ENCODE measurements at regions of chr19 and their contacts with region 1.

Region 1: DNA sequence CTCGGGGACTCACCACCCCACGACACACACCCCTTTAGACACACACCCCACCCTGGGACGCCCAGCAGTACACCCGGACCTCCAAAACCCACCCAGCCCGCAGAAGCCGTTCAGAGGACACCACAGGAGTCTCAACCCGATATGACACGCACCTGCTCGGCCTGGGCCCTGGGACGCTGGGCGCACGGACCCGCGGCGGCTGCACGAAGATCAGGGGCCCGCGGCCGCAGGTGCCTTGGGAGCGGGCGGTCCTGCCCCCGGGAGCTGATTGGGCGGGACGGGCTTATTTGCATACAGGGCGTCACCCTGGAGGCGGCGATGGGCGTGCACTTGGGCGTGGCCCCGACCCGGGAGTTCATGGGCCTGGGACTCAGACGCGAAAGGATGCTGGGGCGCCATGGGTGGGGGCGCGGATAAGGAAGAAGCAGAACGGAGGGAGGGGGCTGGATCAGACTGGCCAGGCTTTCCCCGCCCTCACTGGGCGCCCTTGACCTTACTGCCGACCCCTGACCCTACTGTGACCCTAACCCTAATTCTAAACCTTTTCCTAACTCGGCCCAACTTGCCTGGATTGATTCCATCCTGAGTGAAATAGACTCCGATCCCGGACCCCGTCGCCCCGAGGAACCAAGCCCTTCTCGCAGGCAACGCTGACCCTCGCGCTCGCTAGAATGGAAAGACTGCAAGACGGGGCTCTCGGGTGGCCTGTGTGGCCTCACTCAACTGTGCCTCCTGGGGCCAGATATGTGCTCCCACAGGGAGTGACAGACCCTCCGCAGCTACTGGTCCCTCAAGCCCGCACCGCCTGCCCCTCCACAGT is at the start of gene MEF2B:
- DNase-seq: no peak
- ATAC-seq: peak; percentile 95
- H3K4me3 ChIP-seq: peak within 1 kb of the TSS; percentile 89
- H3K27ac ChIP-seq: 0 out of 2 replicates have a peak within 1 kb of the TSS, but pooled peaks have one; percentile 27
- H3K4me1 ChIP-seq: peaks cover 30% of the 10 kb centered on the region
- H3K27me3 ChIP-seq: no peaks in the 10 kb centered on the region
- CTCF ChIP-seq: no peak
- EP300 ChIP-seq: no peak
- POLR2A ChIP-seq: peak; percentile 93
- RAD21 ChIP-seq: no peak
- polyA plus RNA-seq, gene MEF2B: 0.09 to 0.21 TPM

Region 2: GRCh38 chr19:18946918-18947536 is 223.2 kb before region 1 on chr19:
- CTCF ChIA-PET with region 1: no interaction called
- POLR2A ChIA-PET with region 1: no interaction called
- RAD21 ChIA-PET with region 1: no interaction called
- SMC1A ChIA-PET with region 1: no interaction called
- in situ Hi-C with region 1: no loop called
- intact Hi-C with region 1: no loop called
- DNase-seq: no peak
- ATAC-seq: peak; percentile 25; the same call in 2 of the 3 replicates
- H3K4me3 ChIP-seq: no peak overlapping the region
- H3K27ac ChIP-seq: no peak overlapping the region
- H3K4me1 ChIP-seq: peaks cover 14% of the 10 kb centered on the region
- H3K27me3 ChIP-seq: no peaks in the 10 kb centered on the region
- CTCF ChIP-seq: no peak
- EP300 ChIP-seq: no peak
- POLR2A ChIP-seq: no peak
- RAD21 ChIP-seq: no peak

Region 3: GRCh38 chr19:19053508-19054314 is 116.6 kb before region 1 on chr19:
- CTCF ChIA-PET with region 1: interaction called, 24 read pairs
- POLR2A ChIA-PET with region 1: no interaction called
- RAD21 ChIA-PET with region 1: no interaction called
- SMC1A ChIA-PET with region 1: interaction called, 4 read pairs
- in situ Hi-C with region 1: no loop called
- intact Hi-C with region 1: no loop called
- DNase-seq: no peak
- ATAC-seq: peak; percentile 80
- H3K4me3 ChIP-seq: no peak overlapping the region
- H3K27ac ChIP-seq: no peak overlapping the region
- H3K4me1 ChIP-seq: no peaks in the 10 kb centered on the region
- H3K27me3 ChIP-seq: no peaks in the 10 kb centered on the region
- CTCF ChIP-seq: peak; percentile 64 to 73 (median 66)
- EP300 ChIP-seq: no peak
- POLR2A ChIP-seq: no peak
- RAD21 ChIP-seq: peak; percentile 83

Region 4: GRCh38 chr19:19115954-19116353 is 54.3 kb before region 1 on chr19:
- CTCF ChIA-PET with region 1: interaction called, 10 read pairs
- POLR2A ChIA-PET with region 1: no interaction called
- RAD21 ChIA-PET with region 1: no interaction called
- SMC1A ChIA-PET with region 1: no interaction called
- in situ Hi-C with region 1: no loop called
- intact Hi-C with region 1: no loop called
- DNase-seq: no peak
- ATAC-seq: peak; percentile 86
- H3K4me3 ChIP-seq: no peak overlapping the region
- H3K27ac ChIP-seq: no peak overlapping the region
- H3K4me1 ChIP-seq: no peaks in the 10 kb centered on the region
- H3K27me3 ChIP-seq: no peaks in the 10 kb centered on the region
- CTCF ChIP-seq: peak; percentile 39 to 71 (median 66)
- EP300 ChIP-seq: no peak
- POLR2A ChIP-seq: no peak
- RAD21 ChIP-seq: peak; percentile 41; the same call in 1 of the 2 replicates

Region 5: GRCh38 chr19:19145684-19146608 is 24.3 kb before region 1 on chr19:
- CTCF ChIA-PET with region 1: interaction called, 207 read pairs
- POLR2A ChIA-PET with region 1: interaction called, 7 read pairs
- RAD21 ChIA-PET with region 1: interaction called, 394 read pairs
- SMC1A ChIA-PET with region 1: interaction called, 114 read pairs
- in situ Hi-C with region 1: loop called (anchors 5 kb)
- intact Hi-C with region 1: loop called (anchors 1 kb)
- DNase-seq: no peak
- ATAC-seq: peak; percentile 97
- H3K4me3 ChIP-seq: no peak overlapping the region
- H3K27ac ChIP-seq: no peak overlapping the region
- H3K4me1 ChIP-seq: 0 out of 2 replicates have a peak, but pooled peaks cover 3% of the 10 kb centered on the region
- H3K27me3 ChIP-seq: no peaks in the 10 kb centered on the region
- CTCF ChIP-seq: peak; percentile 89 to 98 (median 94)
- EP300 ChIP-seq: no peak
- POLR2A ChIP-seq: peak; percentile 36; the same call in 1 of the 2 replicates
- RAD21 ChIP-seq: peak; percentile 98

Region 6: DNA sequence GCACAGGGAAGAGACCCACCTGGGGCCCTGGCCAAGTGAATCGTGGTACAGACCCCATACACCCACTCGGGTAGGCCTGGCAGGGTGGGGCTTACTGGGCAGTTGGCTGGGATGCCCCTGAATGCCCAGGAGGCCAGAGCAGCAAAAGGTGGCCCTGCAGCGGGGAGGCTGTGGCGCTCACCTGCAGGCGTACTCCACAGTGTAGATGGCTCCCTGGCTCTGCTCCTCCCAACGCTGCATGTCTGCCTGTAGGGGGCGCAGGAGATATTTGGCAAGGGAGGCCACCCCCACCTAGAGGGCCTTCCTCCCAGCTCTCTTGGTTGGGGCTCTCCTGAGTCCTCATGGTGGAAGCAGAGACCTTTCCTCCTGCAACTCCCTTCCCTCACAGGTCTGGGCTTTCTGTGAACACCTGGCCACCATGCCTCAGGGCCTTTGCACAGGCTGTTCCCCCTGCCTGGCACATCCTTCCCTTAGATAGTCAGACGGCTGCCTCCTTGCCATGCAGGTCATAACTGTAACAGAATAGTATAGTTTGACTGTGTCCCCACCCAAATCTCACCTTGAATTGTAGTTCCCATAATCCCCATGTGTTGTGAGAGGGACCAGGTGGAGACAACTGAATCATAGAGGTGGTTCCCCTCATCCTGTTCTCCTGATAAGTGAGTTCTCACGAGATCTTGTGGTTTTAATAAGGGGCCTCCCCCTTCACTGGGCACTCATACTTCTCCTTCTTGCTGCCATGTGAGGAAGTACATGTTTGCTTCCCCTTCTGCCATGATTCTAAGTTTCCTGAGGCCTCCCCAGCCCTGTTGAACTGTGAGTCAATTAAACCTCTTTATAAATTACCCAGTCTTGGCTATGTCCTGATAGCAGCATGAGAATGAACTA is 15.8 kb after region 1 on chr19:
- CTCF ChIA-PET with region 1: interaction called, 15 read pairs
- POLR2A ChIA-PET with region 1: interaction called, 4 read pairs
- RAD21 ChIA-PET with region 1: interaction called, 4 read pairs
- SMC1A ChIA-PET with region 1: interaction called, 7 read pairs
- in situ Hi-C with region 1: no loop called
- intact Hi-C with region 1: no loop called
- DNase-seq: no peak
- ATAC-seq: peak; percentile 95
- H3K4me3 ChIP-seq: no peak overlapping the region
- H3K27ac ChIP-seq: no peak overlapping the region
- H3K4me1 ChIP-seq: peaks cover 6% of the 10 kb centered on the region; the same call in 1 of the 2 replicates
- H3K27me3 ChIP-seq: no peaks in the 10 kb centered on the region
- CTCF ChIP-seq: peak; percentile 36 to 70 (median 59)
- EP300 ChIP-seq: no peak
- POLR2A ChIP-seq: no peak
- RAD21 ChIP-seq: peak; percentile 59